GM10248 (cell line): ENCODE measurements at regions of chr3 and their contacts with region 1.

Region 1: DNA sequence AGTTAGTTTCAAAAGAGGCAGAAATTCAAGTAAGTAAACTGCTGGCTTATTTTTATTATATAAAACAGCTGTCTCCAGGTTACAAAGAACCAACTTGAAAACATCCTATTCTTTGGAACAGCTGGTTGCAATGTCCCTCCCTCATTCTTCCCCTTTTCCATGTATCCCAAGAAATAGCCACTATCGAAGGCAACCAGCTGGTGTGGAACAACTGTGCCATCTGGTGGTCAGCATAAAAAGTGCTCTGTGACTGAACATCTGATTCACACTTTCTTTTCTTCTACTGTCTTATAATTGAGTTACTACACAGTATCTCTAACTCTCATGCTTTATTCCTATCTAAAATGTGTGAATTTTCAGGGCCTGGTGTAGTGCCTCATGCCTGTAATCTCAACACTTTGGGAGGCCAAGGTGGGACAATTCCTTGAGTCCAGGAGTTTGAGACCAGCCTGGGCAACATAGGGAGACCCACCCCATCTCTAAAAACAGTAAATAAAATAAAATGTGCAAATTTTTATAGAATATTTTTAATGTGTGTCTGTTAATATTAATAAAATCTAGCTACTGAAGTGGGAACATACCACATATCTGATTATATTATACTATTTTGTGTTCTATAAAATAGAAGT is 9.6 kb downstream of the OSBPL11 start:
- DNase-seq: peak; percentile 53
- CTCF ChIP-seq: peak; percentile 83

Region 2: DNA sequence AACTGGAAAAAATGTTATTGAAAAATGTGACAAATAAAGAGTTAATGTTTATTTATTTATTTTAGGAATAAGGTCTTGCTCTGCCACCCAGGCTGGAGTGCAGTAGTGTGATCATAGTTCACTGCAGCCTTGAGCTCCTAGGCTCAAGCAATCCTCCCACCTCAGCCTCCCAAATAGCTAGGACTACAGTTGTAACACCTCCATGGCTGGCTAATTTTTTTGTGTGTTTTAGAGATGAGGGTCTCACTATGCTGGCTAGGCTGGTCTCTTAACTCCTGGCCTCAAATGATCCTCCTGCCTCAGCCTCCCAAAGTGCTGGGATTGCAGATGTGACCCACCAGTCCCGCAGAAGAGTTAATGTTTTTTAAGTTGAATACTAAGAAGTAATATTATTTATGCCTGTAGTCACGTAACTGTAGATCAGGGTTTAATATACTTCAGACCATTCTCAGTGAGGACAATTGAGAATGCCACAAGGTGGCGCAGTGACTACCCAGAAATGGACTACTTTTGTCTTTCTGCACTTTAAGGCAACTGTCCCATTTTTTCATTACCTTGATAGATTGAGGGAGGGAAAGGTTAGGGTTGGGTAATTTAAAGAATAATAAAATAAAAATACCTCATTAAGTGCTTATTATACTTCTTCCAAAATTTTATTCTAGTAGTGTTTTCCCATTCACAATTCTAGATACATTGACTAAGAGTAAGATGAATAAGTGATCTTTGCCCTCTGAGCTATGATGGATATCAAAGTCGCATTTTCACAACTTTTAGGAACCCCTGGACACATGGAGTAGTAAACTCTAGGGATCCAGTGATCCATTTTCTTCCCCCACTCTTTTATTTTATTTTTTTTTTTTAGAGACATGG is 657.1 kb before region 1 on chr3:
- CTCF ChIA-PET with region 1: interaction called, 22 read pairs
- POLR2A ChIA-PET with region 1: no interaction called
- DNase-seq: peak; percentile 42
- CTCF ChIP-seq: peak; percentile 66

Region 3: DNA sequence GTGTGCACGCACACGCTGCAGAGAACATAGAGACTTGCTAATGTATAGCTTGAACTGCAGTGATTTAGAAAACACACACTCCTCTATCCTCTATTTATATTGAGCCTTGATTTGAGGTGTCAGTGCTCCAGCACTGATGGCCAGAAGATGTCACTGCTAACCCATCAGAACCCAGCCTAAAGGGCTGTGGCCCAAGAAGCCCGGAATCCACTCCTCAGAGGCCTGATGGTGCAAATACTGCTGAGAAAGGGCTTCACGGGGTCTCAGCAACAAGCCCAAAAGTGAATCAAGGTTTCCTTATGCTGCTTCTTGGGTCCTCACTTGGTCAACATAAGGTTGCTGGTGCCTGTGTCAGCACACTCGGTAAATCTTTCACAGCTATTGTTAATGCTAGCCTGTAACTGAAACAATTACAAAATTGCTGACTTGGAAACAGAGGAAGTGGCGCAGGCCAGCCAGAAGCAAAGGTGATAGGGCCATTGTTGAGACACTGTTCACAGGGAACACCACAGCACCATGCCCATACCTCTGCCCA is 590.2 kb before region 1 on chr3:
- CTCF ChIA-PET with region 1: interaction called, 12 read pairs
- POLR2A ChIA-PET with region 1: no interaction called
- DNase-seq: peak; percentile 75
- CTCF ChIP-seq: peak; percentile 77

Region 4: GRCh38 chr3:125437631-125438435 is 147.9 kb before region 1 on chr3:
- CTCF ChIA-PET with region 1: interaction called, 20 read pairs
- POLR2A ChIA-PET with region 1: no interaction called
- DNase-seq: peak; percentile 58
- CTCF ChIP-seq: peak; percentile 82

Region 5: GRCh38 chr3:125519678-125520589 is 65.8 kb before region 1 on chr3 and contains the start of gene SNX4:
- CTCF ChIA-PET with region 1: interaction called, 10 read pairs
- POLR2A ChIA-PET with region 1: no interaction called
- DNase-seq: peak; percentile 93
- CTCF ChIP-seq: no peak

Region 6: GRCh38 chr3:125556314-125556713 is 29.4 kb before region 1 on chr3:
- CTCF ChIA-PET with region 1: interaction called, 14 read pairs
- POLR2A ChIA-PET with region 1: no interaction called
- DNase-seq: no peak
- CTCF ChIP-seq: no peak

Region 7: GRCh38 chr3:125573216-125573615 is 12.5 kb before region 1 on chr3:
- CTCF ChIA-PET with region 1: interaction called, 26 read pairs
- POLR2A ChIA-PET with region 1: interaction called, 4 read pairs
- DNase-seq: no peak
- CTCF ChIP-seq: no peak